Left cardiac atrium (tissue), 4 donors: ENCODE measurements at regions of chr7 and their contacts with region 1.

Region 1: DNA sequence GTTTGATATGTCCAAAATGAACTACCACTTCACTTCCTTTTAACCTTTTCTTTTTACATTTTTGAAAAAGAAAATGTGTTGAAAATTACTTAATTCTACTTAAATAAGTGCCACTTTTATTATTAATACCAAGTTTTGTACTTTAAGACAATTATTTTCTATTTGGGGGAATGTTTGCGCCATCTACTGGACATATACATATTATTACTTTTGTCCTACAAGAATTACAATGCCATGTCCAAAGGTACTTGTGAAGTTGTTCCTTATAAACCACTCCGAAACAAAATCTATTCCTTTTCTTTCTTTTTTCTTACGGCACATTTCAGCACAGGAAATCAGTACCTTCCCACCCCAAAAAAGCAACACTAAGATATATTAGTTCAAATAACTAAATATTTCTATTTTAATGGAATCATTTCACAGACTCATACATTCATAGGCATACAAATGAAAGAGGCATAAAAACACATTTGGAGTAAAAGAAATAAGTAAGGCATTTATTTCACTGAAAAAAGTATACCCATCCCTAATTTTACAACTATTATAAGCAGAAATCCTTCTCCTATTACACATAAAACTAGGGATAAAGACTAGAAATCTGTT is 169.9 kb downstream of the RNF133 start:
- DNase-seq: no peak
- ATAC-seq: no peak

Region 2: GRCh38 chr7:122092964-122093797 is 435.8 kb before region 1 on chr7:
- intact Hi-C with region 1: loop called in 1 of 2 experiments (anchors 5 kb)
- DNase-seq: peak; percentile 50
- ATAC-seq: peak; percentile 23 to 45

Region 3: GRCh38 chr7:122219253-122219865 is 309.6 kb before region 1 on chr7:
- intact Hi-C with region 1: loop called in 1 of 2 experiments (anchors 2 kb)
- DNase-seq: no peak
- ATAC-seq: no peak

Region 4: GRCh38 chr7:122225874-122226273 is 303.1 kb before region 1 on chr7:
- intact Hi-C with region 1: loop called in 1 of 2 experiments (anchors 5 kb)
- DNase-seq: no peak
- ATAC-seq: no peak

Region 5: DNA sequence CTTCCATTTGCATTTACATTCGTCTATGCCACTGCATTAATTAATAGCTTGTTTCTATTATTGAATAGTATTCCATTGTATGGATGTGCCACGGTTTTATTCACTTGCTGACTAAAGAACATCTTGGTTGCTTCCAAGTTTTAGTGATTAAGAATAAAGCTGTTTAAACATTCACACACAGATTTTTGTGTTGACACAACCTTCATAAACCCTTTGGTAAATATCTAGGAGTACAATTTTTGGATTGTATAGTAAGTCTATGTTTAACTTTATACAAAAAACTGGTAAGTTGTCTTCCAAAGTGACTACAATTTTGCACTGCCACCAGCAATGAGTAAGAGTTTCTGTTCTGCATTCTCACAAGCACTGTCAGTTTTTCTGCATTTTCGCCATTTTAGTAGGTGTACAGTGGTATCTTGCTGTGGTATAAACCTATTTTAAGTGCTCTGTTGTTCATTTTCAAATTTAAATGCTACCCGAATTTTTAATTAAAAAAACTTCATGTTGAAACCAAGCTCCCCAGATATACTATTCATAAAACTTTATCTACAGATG is 48.5 kb after region 1 on chr7:
- intact Hi-C with region 1: no loop called
- DNase-seq: no peak
- ATAC-seq: no peak